CD4-positive, alpha-beta T cell (primary cell): ENCODE measurements at regions of chr2 and their contacts with region 1.

Region 1: GRCh38 chr2:39080152-39080551 is 40.7 kb downstream of the SOS1 start:
- DNase-seq: no peak
- ATAC-seq: no peak
- H3K4me3 ChIP-seq: no peak overlapping the region
- H3K4me3 Mint-ChIP-seq: no peak overlapping the region
- H3K27ac ChIP-seq: no peak overlapping the region
- H3K27ac Mint-ChIP-seq: no peak overlapping the region
- H3K4me1 ChIP-seq: peaks cover 10% of the 10 kb centered on the region
- H3K4me1 Mint-ChIP-seq: peaks cover 44% of the 10 kb centered on the region
- H3K27me3 ChIP-seq: no peaks in the 10 kb centered on the region
- H3K27me3 Mint-ChIP-seq: no peaks in the 10 kb centered on the region
- CTCF ChIP-seq: no peak

Region 2: DNA sequence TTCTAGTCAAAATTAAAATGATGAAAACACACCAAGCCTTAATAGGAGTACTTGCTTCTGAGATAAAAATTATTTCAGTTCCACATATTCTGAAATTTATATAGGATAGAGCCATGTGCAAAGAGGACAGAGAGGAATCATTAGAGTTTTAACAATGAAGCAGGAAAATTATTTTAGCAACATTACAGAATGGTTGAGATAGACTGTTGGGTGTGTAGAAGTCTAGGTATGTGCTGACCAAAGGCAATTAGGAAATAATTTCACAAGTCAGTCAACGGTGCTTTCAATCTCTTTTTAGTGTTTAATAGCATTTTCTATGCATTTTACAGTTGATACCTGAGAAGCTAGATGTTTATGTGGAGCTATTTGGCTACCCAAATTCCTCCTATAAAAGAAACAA is 15.5 kb after region 1 on chr2:
- CTCF ChIA-PET with region 1: interaction called, 3 read pairs
- POLR2A ChIA-PET with region 1: interaction called, 10 read pairs
- intact Hi-C with region 1: no loop called
- DNase-seq: no peak
- ATAC-seq: no peak
- H3K4me3 ChIP-seq: no peak overlapping the region
- H3K4me3 Mint-ChIP-seq: no peak overlapping the region
- H3K27ac ChIP-seq: no peak overlapping the region
- H3K27ac Mint-ChIP-seq: peak overlapping the region; percentile 43
- H3K4me1 ChIP-seq: peaks cover 18% of the 10 kb centered on the region
- H3K4me1 Mint-ChIP-seq: peaks cover 76% of the 10 kb centered on the region
- H3K27me3 ChIP-seq: no peaks in the 10 kb centered on the region
- H3K27me3 Mint-ChIP-seq: no peaks in the 10 kb centered on the region
- CTCF ChIP-seq: no peak

Region 3: DNA sequence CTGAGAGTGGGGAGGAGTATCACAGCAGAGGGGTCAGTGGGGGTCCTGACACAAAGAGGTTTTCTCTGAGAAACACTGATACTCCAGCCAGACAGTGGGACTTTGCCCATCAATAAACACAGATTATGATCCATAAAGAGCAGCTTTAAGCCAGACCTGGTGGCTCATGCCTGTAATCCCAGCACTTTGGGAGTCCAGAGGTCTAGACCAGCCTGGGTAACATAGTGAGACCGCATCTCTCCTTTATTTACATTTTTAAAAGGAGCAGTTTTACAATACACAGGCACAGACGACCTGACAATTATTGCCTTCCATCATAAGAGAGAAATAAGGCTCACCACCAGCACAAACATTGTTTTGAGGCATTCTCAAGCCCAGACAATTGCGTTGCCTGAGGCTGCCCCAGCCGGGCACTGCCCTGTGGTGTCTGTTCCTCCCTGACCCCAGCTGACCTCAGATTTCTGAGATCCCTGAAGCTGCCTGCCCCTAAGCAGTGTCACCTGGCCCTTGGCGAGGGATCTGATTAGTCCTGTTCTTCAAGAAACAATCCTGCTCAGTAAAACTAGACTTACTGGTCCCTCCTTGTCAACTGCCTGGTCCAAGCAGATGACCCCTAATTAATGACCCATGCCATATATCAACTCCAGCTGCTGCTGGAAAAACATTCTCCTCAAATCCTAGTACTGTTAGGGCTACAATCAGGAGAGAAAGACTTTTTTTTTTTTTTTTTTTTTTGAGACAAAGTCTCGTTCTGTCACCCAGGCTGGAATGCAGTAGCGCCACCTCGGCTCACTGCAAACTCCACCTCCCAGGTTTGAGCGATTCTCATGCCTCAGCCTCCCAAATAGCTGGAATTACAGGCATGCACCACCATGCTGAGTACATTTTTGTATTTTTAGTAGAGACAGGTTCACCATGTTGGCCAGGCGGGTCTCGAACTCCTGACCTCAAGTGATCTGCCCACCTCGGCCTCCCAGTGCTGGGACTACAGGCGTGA is 100.1 kb after region 1 on chr2:
- CTCF ChIA-PET with region 1: no interaction called
- POLR2A ChIA-PET with region 1: no interaction called
- intact Hi-C with region 1: no loop called
- DNase-seq: no peak
- ATAC-seq: no peak
- H3K4me3 ChIP-seq: no peak overlapping the region
- H3K4me3 Mint-ChIP-seq: no peak overlapping the region
- H3K27ac ChIP-seq: no peak overlapping the region
- H3K27ac Mint-ChIP-seq: no peak overlapping the region
- H3K4me1 ChIP-seq: no peaks in the 10 kb centered on the region
- H3K4me1 Mint-ChIP-seq: no peaks in the 10 kb centered on the region
- H3K27me3 ChIP-seq: no peaks in the 10 kb centered on the region
- H3K27me3 Mint-ChIP-seq: no peaks in the 10 kb centered on the region
- CTCF ChIP-seq: no peak